Right ventricle myocardium inferior (tissue), 1 donor: ENCODE measurements at regions of chr5 and their contacts with region 1.

Region 1: DNA sequence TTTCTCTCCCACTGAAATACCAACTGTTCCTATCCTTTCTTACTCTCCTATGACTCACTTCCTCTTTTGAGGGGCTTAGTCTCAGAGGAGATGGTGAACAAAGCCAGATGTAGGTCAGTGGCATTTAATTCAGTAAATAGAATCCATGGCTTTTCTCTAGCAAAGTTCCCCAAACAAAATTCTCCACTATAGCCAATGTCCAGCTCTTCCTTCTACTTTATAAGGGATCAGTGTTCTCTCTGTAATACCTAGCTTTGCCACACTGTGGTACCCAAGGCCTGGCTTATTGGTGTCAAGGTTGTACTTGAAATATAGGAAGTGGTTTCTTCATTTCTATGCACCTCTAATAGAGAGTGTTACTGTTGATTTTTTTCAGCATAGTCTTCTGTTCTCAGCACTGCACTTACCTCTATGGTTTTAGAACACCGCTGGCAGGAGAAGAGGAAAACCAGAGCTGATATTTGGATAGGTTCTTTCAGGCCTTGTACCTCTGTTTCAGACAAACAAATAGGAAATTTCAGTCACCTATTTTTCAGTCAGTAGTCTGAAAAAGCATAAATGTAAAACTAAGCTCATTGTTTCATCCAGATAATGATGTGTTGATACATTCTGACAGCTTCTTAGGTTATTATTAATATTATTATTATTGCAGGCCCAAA is 40.6 kb upstream of the ITGA2 start:
- DNase-seq: no peak
- ATAC-seq: peak; percentile 96

Region 2: DNA sequence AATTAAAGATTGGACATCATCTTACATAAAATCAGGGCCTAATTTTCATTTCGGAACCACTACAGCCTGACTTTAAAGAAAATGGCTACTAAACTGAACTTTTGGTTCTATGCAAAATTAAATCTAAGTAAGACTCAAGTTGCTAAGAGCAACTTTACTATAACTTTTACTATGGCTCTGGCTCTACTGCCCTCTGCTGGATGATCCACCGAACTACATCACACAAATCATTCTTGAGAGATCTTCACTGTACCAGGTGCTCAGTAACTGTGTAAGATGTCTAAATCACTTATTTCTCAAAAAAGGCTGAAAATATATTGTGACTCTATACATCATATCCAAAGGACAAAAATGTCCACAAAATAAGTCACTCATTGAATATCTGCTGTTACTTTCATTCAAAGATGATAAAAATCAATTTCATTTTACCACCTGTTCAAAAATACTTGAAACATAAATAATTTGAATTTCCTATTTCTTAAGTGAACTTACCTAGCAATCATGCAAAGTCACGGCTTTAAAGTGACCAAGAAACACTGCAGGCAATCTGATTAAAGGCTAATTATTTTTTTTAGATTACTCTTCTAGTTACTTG is 147.5 kb after region 1 on chr5:
- intact Hi-C with region 1: loop called (anchors 2 kb)
- DNase-seq: no peak
- ATAC-seq: no peak